ENCODE measurements at regions of chr6 and their contacts with region 1.

Region 1: GRCh38 chr6:106563614-106564013 is 65.7 kb downstream of the RTN4IP1 start:
- DNase-seq: no peak
- ATAC-seq: no peak
- H3K4me3 Mint-ChIP-seq: no peak overlapping the region
- H3K27ac Mint-ChIP-seq: no peak overlapping the region
- H3K4me1 Mint-ChIP-seq: peaks cover 22% of the 10 kb centered on the region
- H3K27me3 Mint-ChIP-seq: no peaks in the 10 kb centered on the region
- CTCF ChIP-seq: no peak

Region 2: DNA sequence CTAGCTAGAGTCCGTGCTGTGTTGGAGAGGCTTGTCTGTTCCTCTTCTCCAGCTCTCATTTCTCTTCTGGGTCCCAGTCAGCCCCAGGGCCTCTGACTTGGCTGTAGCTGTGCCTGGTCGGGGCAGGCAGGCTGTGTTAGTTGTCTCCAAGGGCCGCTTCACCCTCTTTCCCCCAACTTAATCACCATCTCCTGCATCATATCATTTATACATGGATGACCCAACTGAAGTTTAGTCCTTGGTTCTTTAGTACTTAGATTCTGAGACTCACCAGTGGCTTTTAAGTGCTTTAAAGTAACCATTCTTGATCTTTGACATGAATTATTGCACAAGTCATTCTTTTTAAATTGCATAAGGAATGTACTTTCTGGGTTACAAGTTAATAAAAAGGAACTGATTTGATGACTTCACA is 61.6 kb before region 1 on chr6:
- CTCF ChIA-PET with region 1: interaction called, 34 read pairs
- POLR2A ChIA-PET with region 1: interaction called, 4 read pairs
- intact Hi-C with region 1: no loop called
- DNase-seq: no peak
- ATAC-seq: no peak
- H3K4me3 Mint-ChIP-seq: no peak overlapping the region
- H3K27ac Mint-ChIP-seq: no peak overlapping the region
- H3K4me1 Mint-ChIP-seq: no peaks in the 10 kb centered on the region
- H3K27me3 Mint-ChIP-seq: no peaks in the 10 kb centered on the region
- CTCF ChIP-seq: no peak

Region 3: GRCh38 chr6:106783631-106784566 is 220.3 kb after region 1 on chr6:
- CTCF ChIA-PET with region 1: no interaction called
- POLR2A ChIA-PET with region 1: no interaction called
- intact Hi-C with region 1: no loop called
- DNase-seq: no peak
- ATAC-seq: no peak
- H3K4me3 Mint-ChIP-seq: no peak overlapping the region
- H3K27ac Mint-ChIP-seq: no peak overlapping the region
- H3K4me1 Mint-ChIP-seq: no peaks in the 10 kb centered on the region
- H3K27me3 Mint-ChIP-seq: peaks cover 3% of the 10 kb centered on the region
- CTCF ChIP-seq: no peak